Activated naive CD8-positive, alpha-beta T cell treated with anti-CD3 and anti-CD28 coated beads, Interleukin-2, amount 10 ng/mL, durations not matched to agents 7 days and 5 days (primary cell): ENCODE measurements at regions of chr4 and their contacts with region 1.

Region 1: DNA sequence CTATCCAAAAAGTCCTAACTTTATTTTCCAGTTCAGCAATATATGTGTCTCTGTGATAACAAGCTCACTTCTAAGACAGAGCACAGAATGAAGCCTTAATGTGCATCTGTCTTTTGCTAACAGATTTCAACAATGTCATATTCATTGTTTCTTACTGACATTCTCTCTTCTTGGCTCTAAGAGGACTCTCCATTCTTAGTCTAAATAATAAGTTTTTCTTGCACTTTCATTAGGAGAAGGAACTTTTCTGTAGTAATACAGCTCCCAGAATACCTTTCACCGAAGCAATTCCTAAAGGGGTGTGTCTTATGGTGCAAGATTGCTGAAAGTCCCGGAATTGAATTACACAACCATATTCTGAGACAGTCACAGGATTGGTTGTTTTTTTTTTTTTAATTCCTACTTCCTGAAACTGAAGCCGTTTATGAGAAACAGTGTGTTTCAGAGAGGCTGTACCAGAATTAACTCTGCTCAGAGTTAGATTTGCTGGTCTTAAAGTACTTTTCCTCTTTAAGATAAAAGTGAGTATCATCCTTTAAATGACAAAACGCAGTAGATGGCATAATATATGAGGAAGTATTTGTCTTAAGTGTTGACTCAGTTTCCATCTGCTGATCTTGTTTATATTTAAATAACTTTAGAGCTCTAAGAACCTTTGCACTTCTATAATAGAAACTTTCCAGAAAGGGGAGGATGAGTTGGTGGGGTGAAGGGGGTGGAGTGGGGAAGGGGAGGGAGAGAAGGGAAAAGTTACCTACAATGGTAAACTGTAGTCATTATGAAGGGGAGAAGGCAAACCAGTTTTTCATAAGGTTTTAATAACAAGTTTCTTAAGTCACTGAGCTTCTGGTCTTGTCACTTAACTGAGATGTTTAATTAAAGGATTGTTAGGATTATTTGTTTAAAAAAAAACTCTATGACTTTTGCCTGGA is at the start of gene ALPK1:
- DNase-seq: no peak
- ATAC-seq: peak; percentile 80
- H3K4me3 Mint-ChIP-seq: peak within 1 kb of the TSS; percentile 90
- H3K27ac Mint-ChIP-seq: peak within 1 kb of the TSS; percentile 85
- H3K4me1 Mint-ChIP-seq: peaks cover 15% of the 10 kb centered on the region
- H3K27me3 Mint-ChIP-seq: no peaks in the 10 kb centered on the region
- total RNA-seq, gene ALPK1: 20.9 to 26.0 TPM

Region 2: DNA sequence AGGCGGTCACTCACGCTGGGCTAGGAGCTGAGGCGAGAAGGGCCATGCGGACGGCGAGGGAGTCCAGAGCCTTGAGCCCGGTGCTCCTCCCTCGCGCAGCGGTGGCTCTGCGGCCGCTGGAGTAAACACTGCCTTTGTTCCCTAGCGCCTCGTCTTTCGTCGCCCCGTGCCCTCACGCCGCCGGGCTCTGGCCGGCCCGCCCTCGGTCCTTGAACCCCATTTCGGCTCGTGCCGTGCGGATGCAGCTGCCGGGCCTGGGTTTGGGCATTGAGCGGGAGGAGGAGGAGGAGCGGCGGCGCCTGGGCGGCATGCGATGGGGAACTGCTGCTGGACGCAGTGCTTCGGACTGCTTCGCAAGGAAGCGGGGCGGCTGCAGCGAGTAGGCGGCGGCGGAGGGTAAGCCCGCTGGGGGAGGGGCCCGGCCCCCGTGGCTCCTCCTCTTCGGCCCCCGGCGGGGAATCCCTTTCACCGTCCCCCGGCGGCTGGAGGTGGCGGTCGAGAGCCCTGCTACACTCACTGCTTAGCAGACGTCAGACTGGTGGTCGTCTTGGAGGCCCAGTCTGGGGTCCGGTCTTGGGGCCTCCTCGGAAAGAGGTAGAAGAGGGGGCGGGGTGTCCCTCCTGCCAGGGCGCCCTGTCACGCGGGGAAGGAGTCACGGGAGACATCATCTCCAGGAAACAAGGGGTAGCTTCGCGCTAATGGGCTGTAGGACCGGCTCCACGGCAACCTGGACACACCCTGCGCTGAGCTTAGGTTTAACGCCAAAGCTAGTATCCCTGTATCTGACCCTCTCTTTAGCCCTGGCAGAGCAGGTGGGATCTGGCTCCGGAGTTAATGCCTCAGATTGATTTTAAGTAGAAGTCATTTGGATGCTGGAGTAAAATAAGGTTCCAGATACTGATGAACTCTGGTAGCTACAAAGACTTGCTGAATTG is 65.2 kb before region 1 on chr4 and contains the start of gene AP1AR:
- POLR2A ChIA-PET with region 1: interaction called, 12 read pairs
- DNase-seq: peak; percentile 91
- ATAC-seq: peak; percentile 63
- H3K4me3 Mint-ChIP-seq: peak within 1 kb of the TSS; percentile 83
- H3K27ac Mint-ChIP-seq: peak within 1 kb of the TSS; percentile 98
- H3K4me1 Mint-ChIP-seq: peaks cover 23% of the 10 kb centered on the region
- H3K27me3 Mint-ChIP-seq: peaks cover 2% of the 10 kb centered on the region
- total RNA-seq, gene AP1AR: 14.3 to 18.2 TPM

Region 3: GRCh38 chr4:112270640-112271393 is 26.4 kb before region 1 on chr4:
- POLR2A ChIA-PET with region 1: no interaction called
- DNase-seq: no peak
- ATAC-seq: no peak
- H3K4me3 Mint-ChIP-seq: no peak overlapping the region
- H3K27ac Mint-ChIP-seq: peak overlapping the region; percentile 1
- H3K4me1 Mint-ChIP-seq: peaks cover 22% of the 10 kb centered on the region
- H3K27me3 Mint-ChIP-seq: no peaks in the 10 kb centered on the region

Region 4: DNA sequence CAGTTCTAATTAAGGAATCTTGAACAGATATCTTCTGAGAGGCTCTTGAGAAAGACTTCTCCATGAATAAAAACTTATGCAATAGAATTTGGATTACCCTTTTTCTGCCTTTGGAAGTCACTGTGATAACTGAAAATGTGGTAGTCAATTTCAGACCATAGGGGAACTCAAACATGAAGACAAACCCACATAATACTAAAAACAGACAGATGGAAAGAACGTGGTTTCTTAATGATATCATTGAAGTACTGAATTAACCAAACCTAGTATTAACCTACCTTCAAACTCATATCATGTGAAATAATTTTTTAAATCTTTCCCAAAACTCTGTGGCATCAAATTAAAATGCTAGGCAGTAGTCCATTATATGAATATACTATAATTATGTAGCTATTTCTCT is 1310.8 kb after region 1 on chr4:
- POLR2A ChIA-PET with region 1: no interaction called
- DNase-seq: no peak
- ATAC-seq: no peak
- H3K4me3 Mint-ChIP-seq: no peak overlapping the region
- H3K27ac Mint-ChIP-seq: no peak overlapping the region
- H3K4me1 Mint-ChIP-seq: peaks cover 7% of the 10 kb centered on the region
- H3K27me3 Mint-ChIP-seq: no peaks in the 10 kb centered on the region